Dorsolateral prefrontal cortex (tissue), 120 donors: ENCODE measurements at regions of chr12 and their contacts with region 1.

Region 1: DNA sequence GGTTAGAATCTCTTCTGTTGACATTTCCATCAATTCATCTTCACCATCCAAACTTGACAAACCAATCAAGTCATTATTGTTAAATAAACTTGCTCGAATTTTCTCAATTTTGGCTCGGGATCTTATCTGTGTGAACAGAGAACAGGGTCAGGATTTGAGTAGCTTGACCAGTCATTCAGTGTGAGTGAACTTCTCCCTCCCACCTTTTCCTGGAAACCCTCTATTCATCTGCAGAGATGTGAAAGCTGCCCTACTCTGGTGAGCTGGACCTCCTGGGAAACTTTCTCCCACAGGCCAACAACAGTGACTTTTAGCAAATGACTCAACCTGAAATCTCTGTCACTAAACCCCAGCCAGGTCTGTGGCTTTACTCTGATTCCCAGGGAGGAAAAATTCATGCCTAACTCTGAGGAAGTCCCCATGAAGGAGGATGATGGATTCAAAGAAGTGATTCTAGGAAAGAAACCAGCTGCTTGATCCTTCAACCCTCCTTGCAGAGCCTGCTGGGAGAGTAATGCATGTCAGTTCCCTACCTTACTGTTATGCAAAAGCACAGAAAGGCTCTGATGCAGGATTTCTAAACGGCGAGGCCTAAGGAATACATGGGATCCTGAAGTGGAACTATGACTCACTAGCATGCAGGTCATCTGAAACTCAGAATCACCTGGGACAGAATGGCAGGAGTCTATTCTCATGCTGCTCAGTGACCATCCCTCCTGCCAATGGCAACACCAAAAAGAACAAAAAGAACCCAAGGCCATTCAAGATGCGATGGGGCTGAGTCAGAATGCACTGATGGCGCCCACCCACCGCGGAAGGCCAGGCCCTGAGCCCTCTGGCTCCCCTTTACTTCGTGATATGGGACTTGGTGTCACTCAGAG is 58.0 kb downstream of the TRAFD1 start:
- DNase-seq: no peak
- H3K4me3 ChIP-seq: peak overlapping the region in 8 of 59 donors; percentile 0 to 23 (median 11)
- H3K27ac ChIP-seq: peak overlapping the region; percentile 57 to 99 (median 94)
- H3K27me3 ChIP-seq: no peaks in the 10 kb centered on the region
- CTCF ChIP-seq: no peak

Region 2: GRCh38 chr12:111942557-111942956 is 240.8 kb before region 1 on chr12:
- intact Hi-C with region 1: loop called in 1 of 2 experiments (anchors 10 kb)
- DNase-seq: no peak
- H3K4me3 ChIP-seq: no peak overlapping the region
- H3K27ac ChIP-seq: no peak overlapping the region
- H3K27me3 ChIP-seq: no peaks in the 10 kb centered on the region
- CTCF ChIP-seq: no peak

Region 3: GRCh38 chr12:112012775-112013600 is 170.4 kb before region 1 on chr12 and contains the starts of genes ERP29 and TMEM116:
- intact Hi-C with region 1: loop called (anchors 5 kb)
- DNase-seq: peak; percentile 99 to 100 (median 99)
- H3K4me3 ChIP-seq: peak within 1 kb of the TSS; percentile 50 to 100 (median 95)
- H3K27ac ChIP-seq: peak within 1 kb of the TSS; percentile 74 to 99 (median 95)
- H3K27me3 ChIP-seq: no peaks in the 10 kb centered on the region
- CTCF ChIP-seq: peak; percentile 8 to 74 (median 51)
- total RNA-seq, gene ERP29: 31.1 to 63.4 (median 46.7) TPM
- total RNA-seq, gene TMEM116: 13.7 to 34.8 (median 21.9) TPM

Region 4: GRCh38 chr12:112018571-112019237 is 164.7 kb before region 1 on chr12:
- intact Hi-C with region 1: loop called (anchors 5 kb)
- DNase-seq: no peak
- H3K4me3 ChIP-seq: no peak overlapping the region
- H3K27ac ChIP-seq: peak overlapping the region in 1 of 59 donors; percentile 7
- H3K27me3 ChIP-seq: no peaks in the 10 kb centered on the region
- CTCF ChIP-seq: no peak

Region 5: DNA sequence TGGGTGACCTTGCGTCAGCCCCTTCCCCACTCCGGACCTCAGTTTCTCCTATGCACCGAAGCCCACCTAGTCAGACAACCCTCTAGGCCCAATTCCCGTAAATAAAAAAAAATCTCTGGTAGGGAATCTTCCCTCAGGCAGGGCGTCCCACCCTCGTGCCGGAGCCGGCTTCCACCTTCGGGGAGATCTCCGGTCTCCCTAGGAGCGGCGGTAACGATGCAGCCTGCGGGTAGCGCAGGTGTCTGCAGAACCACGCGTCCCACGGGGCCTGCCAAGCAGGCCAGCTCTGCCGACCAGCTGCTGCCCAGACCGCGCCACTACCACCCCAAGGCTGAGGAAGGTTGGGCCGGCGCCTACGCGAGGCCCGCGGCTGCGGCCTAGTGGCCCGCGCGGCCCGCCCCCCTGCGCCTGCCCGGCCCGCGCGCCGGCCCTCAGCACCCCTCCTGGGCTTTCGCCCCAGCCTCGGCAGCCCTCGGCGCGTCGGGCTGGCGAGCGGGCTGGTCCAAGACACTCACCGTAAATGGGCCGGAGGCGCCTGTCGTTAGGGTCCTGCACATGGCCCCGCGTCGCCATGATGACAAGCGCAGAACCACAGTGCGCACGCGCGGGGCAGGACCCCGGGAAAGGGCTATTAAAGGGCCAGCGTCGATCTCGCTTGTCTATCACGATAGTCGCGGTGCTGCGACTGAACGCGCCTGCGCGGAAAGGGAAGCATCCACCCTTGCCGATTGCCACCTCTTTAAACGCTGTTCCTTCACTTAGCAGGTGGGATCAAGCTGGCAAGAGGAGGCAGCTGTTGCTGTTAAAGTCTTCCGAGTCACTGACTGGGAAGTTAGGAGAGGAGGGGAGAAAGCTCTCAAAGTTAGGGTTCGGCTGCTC is 74.9 kb before region 1 on chr12 and contains the start of gene NAA25:
- intact Hi-C with region 1: loop called in 1 of 2 experiments (anchors 2 kb)
- DNase-seq: peak; percentile 83 to 91 (median 86)
- H3K4me3 ChIP-seq: peak within 1 kb of the TSS; percentile 67 to 99 (median 87)
- H3K27ac ChIP-seq: peak within 1 kb of the TSS; percentile 75 to 98 (median 94)
- H3K27me3 ChIP-seq: no peaks in the 10 kb centered on the region
- CTCF ChIP-seq: peak in 2 of 56 donors; percentile 6 to 12
- total RNA-seq, gene NAA25: 24.6 to 79.2 (median 44.6) TPM

Region 6: GRCh38 chr12:112116232-112117060 is 66.9 kb before region 1 on chr12:
- intact Hi-C with region 1: loop called in 1 of 2 experiments (anchors 2 kb)
- DNase-seq: peak; percentile 39 to 91 (median 85)
- H3K4me3 ChIP-seq: peak overlapping the region in 55 of 59 donors; percentile 3 to 50 (median 31)
- H3K27ac ChIP-seq: peak overlapping the region; percentile 53 to 98 (median 93)
- H3K27me3 ChIP-seq: no peaks in the 10 kb centered on the region
- CTCF ChIP-seq: peak in 3 of 56 donors; percentile 9 to 23 (median 11)

Region 7: GRCh38 chr12:112125250-112125999 is 58.0 kb before region 1 on chr12 and contains the start of gene TRAFD1:
- intact Hi-C with region 1: loop called in 1 of 2 experiments (anchors 1 kb)
- DNase-seq: peak; percentile 96 to 100 (median 98)
- H3K4me3 ChIP-seq: peak within 1 kb of the TSS; percentile 65 to 99 (median 95)
- H3K27ac ChIP-seq: peak within 1 kb of the TSS; percentile 44 to 97 (median 91)
- H3K27me3 ChIP-seq: no peaks in the 10 kb centered on the region
- CTCF ChIP-seq: peak in 18 of 56 donors; percentile 6 to 39 (median 16)
- total RNA-seq, gene TRAFD1: 15.1 to 47.9 (median 24.8) TPM

Region 8: DNA sequence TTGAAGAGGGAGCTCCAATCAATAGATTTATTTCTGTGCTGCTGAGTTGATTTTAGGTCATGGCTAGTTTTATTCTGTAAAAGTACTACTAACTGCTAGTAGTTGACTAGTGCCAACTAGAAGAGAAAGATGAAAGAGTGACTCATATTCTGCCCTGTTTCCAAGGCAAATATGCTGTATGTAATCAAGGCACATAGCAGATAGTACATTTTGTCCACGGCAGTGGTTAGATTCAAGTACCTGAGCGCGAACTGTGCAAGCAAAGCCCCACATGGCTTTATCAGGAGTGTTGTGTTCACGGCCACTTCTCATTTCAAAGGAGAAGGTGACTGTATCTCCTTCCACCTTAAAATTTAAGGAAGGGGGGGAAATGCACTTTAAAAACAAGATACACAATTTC is 68.8 kb after region 1 on chr12:
- intact Hi-C with region 1: no loop called
- DNase-seq: no peak
- H3K4me3 ChIP-seq: no peak overlapping the region
- H3K27ac ChIP-seq: no peak overlapping the region
- H3K27me3 ChIP-seq: no peaks in the 10 kb centered on the region
- CTCF ChIP-seq: no peak

Region 9: GRCh38 chr12:112798006-112798760 is 614.8 kb after region 1 on chr12:
- intact Hi-C with region 1: no loop called
- DNase-seq: peak in 8 of 10 donors; percentile 27 to 67 (median 60)
- H3K4me3 ChIP-seq: peak overlapping the region in 11 of 59 donors; percentile 7 to 34 (median 21)
- H3K27ac ChIP-seq: peak overlapping the region in 53 of 59 donors; percentile 3 to 89 (median 66)
- H3K27me3 ChIP-seq: peaks cover 0 to 40% (median 4%) of the 10 kb centered on the region in 45 donors
- CTCF ChIP-seq: no peak